ENCODE measurements at regions of chr6 and their contacts with region 1.

Region 1: DNA sequence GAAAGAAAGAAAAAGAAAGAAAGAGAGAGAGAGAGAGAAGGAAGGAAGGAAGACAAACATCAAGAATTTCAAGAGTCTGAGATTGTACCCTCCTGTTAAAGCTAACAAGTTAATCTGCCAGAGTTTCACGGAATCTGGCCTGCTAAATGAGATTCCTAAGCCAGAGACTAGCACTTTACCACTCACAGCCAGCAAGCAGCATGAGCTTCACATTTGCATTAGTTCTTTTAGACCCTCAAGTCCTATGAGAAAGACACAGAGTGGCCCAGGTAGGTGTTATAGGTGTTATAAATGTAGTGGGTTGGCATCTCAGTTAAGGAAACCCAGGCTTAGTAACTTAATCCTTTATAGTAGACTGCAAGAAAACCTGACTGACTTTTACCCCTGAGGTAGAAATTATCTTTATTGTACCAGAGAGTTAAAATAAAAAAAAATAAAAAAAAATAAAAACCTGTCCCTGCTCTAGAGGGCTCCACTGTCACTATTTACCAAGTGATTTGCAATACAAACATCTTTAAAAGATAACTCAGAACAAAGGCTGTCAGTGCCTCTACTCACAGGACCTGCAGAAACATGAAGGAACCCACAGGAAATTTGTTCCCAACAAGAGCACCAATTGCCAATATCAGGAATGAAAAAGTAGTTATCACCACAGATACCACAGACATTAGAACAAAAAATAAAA is 9.7 kb upstream of the IBTK start:
- DNase-seq: no peak
- H3K4me3 ChIP-seq: no peak overlapping the region
- H3K27ac ChIP-seq: no peak overlapping the region
- H3K4me1 ChIP-seq: peaks cover 19% of the 10 kb centered on the region
- H3K27me3 ChIP-seq: no peaks in the 10 kb centered on the region
- CTCF ChIP-seq: no peak; the same call in 1 of the 2 replicates

Region 2: DNA sequence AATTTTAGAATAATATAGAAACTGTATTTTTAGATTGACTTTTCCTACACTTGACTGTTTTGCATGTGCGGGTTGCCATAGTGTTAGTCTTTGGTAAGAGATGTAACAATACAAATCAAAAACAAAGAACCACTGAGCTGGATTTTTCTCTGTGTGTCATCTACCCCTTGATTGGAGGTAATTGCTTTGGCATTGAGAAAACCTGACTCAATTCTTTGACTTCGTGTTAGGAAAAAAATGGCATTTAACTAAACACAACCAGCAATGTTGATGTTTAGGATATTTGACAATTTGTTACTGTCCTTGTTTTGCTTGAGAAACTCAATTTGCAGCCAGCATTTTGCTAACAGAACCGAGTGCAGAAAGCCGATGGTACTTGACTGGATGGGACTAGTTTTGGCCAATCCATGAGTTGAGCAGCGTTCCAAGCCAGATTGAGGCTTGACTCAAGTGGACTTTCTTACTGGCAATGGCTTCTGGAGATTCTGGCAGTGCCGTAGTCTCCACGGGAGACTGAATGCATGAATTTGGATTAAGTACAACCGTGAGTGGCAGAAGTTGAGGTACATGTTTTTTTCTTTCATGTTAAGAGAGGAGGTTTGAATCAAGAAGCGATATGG is 123.4 kb after region 1 on chr6:
- CTCF ChIA-PET with region 1: no interaction called
- POLR2A ChIA-PET with region 1: interaction called, 12 read pairs
- intact Hi-C with region 1: no loop called
- DNase-seq: no peak
- H3K4me3 ChIP-seq: no peak overlapping the region
- H3K27ac ChIP-seq: no peak overlapping the region
- H3K4me1 ChIP-seq: peaks cover 17% of the 10 kb centered on the region
- H3K27me3 ChIP-seq: no peaks in the 10 kb centered on the region
- CTCF ChIP-seq: no peak

Region 3: GRCh38 chr6:82589509-82590206 is 332.4 kb after region 1 on chr6:
- CTCF ChIA-PET with region 1: no interaction called
- POLR2A ChIA-PET with region 1: no interaction called
- intact Hi-C with region 1: loop called (anchors 5 kb)
- DNase-seq: peak; percentile 6 to 62
- H3K4me3 ChIP-seq: no peak overlapping the region
- H3K27ac ChIP-seq: no peak overlapping the region
- H3K4me1 ChIP-seq: peaks cover 18% of the 10 kb centered on the region; the same call in 1 of the 2 replicates
- H3K27me3 ChIP-seq: no peaks in the 10 kb centered on the region
- CTCF ChIP-seq: peak; percentile 42; the same call in 1 of the 2 replicates

Region 4: DNA sequence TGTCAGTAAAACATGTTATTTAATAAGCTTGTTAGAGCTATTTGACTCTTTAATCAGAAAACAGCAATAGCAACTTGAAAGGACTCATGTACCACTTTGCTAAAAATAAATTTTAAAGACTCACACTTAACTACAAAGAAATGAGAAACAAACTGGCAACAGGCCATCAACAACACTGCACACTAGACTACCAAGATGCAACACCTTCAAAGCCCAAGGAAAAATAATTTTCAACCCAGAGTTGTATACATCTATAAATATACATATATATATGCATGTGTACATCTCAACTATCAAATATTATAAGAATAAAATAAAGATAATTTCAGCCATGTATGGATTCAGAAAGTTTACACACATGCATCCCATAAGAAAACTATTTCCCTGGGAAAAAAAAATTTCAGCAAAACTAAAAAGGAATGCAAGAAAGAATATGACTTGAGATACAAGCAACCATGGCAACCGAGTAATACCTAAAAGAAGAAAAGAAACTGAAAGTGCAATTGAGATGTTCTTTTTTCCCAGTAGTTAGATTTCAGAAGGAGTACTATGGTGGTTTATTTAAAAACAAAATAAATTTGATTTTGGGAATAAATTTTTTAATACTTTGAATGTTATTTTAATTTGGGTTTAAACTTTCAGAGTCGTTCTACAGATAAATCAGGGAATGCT is 504.6 kb after region 1 on chr6:
- CTCF ChIA-PET with region 1: no interaction called
- POLR2A ChIA-PET with region 1: interaction called, 20 read pairs
- intact Hi-C with region 1: no loop called
- DNase-seq: no peak
- H3K4me3 ChIP-seq: no peak overlapping the region
- H3K27ac ChIP-seq: no peak overlapping the region
- H3K4me1 ChIP-seq: no peaks in the 10 kb centered on the region
- H3K27me3 ChIP-seq: no peaks in the 10 kb centered on the region
- CTCF ChIP-seq: no peak

Measured in PC-9 (cell line).